Natural killer cell (primary cell): ENCODE measurements at regions of chr14 and their contacts with region 1.

Region 1: DNA sequence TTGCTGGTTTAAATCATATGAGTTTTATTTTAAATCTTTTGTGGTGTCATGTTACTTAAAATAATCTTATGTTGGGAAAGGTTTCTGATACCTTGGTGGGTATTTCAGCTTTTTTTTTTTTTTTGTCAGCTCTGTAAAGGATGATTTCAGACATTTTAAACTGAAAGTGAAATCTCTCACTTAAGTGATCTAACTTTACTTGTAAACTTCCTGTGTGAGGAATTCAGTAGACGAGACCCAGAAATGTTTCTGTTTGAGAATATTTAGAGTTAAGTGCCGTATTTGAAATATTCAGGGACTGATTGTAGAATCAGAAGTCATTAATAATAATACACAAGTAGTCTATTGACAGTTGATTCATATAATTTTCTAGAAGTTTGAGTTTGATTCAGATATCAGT is 37.8 kb downstream of the PROX2 start:
- DNase-seq: peak in 1 of 2 donors; percentile 65
- ATAC-seq: peak; percentile 83 to 84 (median 83)
- H3K4me3 ChIP-seq: no peak overlapping the region
- H3K4me3 Mint-ChIP-seq: peak overlapping the region; percentile 84
- H3K27ac ChIP-seq: peak overlapping the region; percentile 95
- H3K27ac Mint-ChIP-seq: peak overlapping the region; percentile 97 to 98
- H3K4me1 ChIP-seq: peaks cover 16% of the 10 kb centered on the region
- H3K4me1 Mint-ChIP-seq: peaks cover 44 to 50% of the 10 kb centered on the region in 2 donors
- H3K27me3 ChIP-seq: no peaks in the 10 kb centered on the region
- H3K27me3 Mint-ChIP-seq: no peaks in the 10 kb centered on the region
- CTCF ChIP-seq: no peak

Region 2: GRCh38 chr14:74401504-74402241 is 436.5 kb before region 1 on chr14:
- intact Hi-C with region 1: no loop called
- DNase-seq: peak; percentile 51 to 83
- ATAC-seq: peak; percentile 91 to 98 (median 96)
- H3K4me3 ChIP-seq: peak overlapping the region; percentile 13
- H3K4me3 Mint-ChIP-seq: peak overlapping the region; percentile 84
- H3K27ac ChIP-seq: peak overlapping the region; percentile 74
- H3K27ac Mint-ChIP-seq: peak overlapping the region; percentile 77 to 89
- H3K4me1 ChIP-seq: peaks cover 29% of the 10 kb centered on the region
- H3K4me1 Mint-ChIP-seq: peaks cover 19 to 32% of the 10 kb centered on the region in 2 donors
- H3K27me3 ChIP-seq: no peaks in the 10 kb centered on the region
- H3K27me3 Mint-ChIP-seq: peaks cover 8 to 9% of the 10 kb centered on the region in 2 donors
- CTCF ChIP-seq: no peak

Region 3: GRCh38 chr14:74762917-74763802 is 75.0 kb before region 1 on chr14 and contains the start of gene YLPM1:
- intact Hi-C with region 1: loop called (anchors 2 kb)
- DNase-seq: peak; percentile 87 to 98
- ATAC-seq: peak; percentile 94 to 99 (median 95)
- H3K4me3 ChIP-seq: peak within 1 kb of the TSS; percentile 96
- H3K4me3 Mint-ChIP-seq: peak within 1 kb of the TSS; percentile 92
- H3K27ac ChIP-seq: peak within 1 kb of the TSS; percentile 93
- H3K27ac Mint-ChIP-seq: peak within 1 kb of the TSS; percentile 91 to 94
- H3K4me1 ChIP-seq: peaks cover 13% of the 10 kb centered on the region
- H3K4me1 Mint-ChIP-seq: peaks cover 45 to 46% of the 10 kb centered on the region in 2 donors
- H3K27me3 ChIP-seq: no peaks in the 10 kb centered on the region
- H3K27me3 Mint-ChIP-seq: peaks cover 0 to 2% of the 10 kb centered on the region in 2 donors
- CTCF ChIP-seq: peak; percentile 57
- total RNA-seq, gene YLPM1: 86.1 to 101 (median 93.3) TPM

Region 4: GRCh38 chr14:74881431-74882361 is 43.5 kb after region 1 on chr14 and contains the start of gene DLST:
- intact Hi-C with region 1: loop called (anchors 2 kb)
- DNase-seq: peak; percentile 87 to 91
- ATAC-seq: peak; percentile 91 to 95 (median 95)
- H3K4me3 ChIP-seq: peak within 1 kb of the TSS; percentile 61
- H3K4me3 Mint-ChIP-seq: peak within 1 kb of the TSS; percentile 100
- H3K27ac ChIP-seq: peak within 1 kb of the TSS; percentile 61
- H3K27ac Mint-ChIP-seq: peak within 1 kb of the TSS; percentile 97 to 98
- H3K4me1 ChIP-seq: peaks cover 29% of the 10 kb centered on the region
- H3K4me1 Mint-ChIP-seq: peaks cover 56 to 58% of the 10 kb centered on the region in 2 donors
- H3K27me3 ChIP-seq: no peaks in the 10 kb centered on the region
- H3K27me3 Mint-ChIP-seq: no peaks in the 10 kb centered on the region
- CTCF ChIP-seq: no peak
- total RNA-seq, gene DLST: 161 to 180 (median 163) TPM